Colonic mucosa (tissue), 4 donors: ENCODE measurements at regions of chr11 and their contacts with region 1.

Region 1: GRCh38 chr11:101456812-101457211 is 127.0 kb downstream of the TRPC6 start:
- DNase-seq: no peak
- H3K4me3 ChIP-seq: no peak overlapping the region
- H3K27ac ChIP-seq: no peak overlapping the region
- H3K4me1 ChIP-seq: no peaks in the 10 kb centered on the region
- H3K27me3 ChIP-seq: no peaks in the 10 kb centered on the region
- CTCF ChIP-seq: peak; percentile 26

Region 2: GRCh38 chr11:101848262-101848661 is 391.4 kb after region 1 on chr11:
- intact Hi-C with region 1: loop called (anchors 10 kb)
- DNase-seq: no peak
- H3K4me3 ChIP-seq: no peak overlapping the region
- H3K27ac ChIP-seq: no peak overlapping the region
- H3K4me1 ChIP-seq: no peaks in the 10 kb centered on the region
- H3K27me3 ChIP-seq: no peaks in the 10 kb centered on the region
- CTCF ChIP-seq: no peak